ENCODE measurements at regions of chr3 and their contacts with region 1.

Region 1: DNA sequence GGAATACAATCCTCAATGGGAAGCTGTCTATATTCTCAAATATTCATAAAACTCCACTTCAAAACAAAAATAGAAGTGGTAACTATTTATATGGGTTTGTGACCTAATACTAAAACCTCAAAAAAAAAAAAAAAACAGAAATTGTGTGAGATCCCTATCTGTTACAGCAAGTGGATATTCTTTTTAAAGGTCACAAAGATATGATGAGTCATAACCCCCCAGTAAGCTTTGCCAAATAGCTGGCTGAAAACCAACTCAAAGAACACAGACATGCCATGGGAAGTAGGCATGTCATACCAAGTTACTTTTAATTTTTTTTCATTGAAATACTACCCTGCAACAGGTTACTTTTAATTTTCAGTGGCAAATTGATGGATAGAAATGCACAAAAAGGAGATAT is 62.5 kb downstream of the CBLB start:
- DNase-seq: no peak
- ATAC-seq: no peak
- H3K4me3 ChIP-seq: no peak overlapping the region
- H3K27ac ChIP-seq: no peak overlapping the region
- H3K4me1 ChIP-seq: no peaks in the 10 kb centered on the region
- H3K27me3 ChIP-seq: no peaks in the 10 kb centered on the region
- CTCF ChIP-seq: no peak

Region 2: DNA sequence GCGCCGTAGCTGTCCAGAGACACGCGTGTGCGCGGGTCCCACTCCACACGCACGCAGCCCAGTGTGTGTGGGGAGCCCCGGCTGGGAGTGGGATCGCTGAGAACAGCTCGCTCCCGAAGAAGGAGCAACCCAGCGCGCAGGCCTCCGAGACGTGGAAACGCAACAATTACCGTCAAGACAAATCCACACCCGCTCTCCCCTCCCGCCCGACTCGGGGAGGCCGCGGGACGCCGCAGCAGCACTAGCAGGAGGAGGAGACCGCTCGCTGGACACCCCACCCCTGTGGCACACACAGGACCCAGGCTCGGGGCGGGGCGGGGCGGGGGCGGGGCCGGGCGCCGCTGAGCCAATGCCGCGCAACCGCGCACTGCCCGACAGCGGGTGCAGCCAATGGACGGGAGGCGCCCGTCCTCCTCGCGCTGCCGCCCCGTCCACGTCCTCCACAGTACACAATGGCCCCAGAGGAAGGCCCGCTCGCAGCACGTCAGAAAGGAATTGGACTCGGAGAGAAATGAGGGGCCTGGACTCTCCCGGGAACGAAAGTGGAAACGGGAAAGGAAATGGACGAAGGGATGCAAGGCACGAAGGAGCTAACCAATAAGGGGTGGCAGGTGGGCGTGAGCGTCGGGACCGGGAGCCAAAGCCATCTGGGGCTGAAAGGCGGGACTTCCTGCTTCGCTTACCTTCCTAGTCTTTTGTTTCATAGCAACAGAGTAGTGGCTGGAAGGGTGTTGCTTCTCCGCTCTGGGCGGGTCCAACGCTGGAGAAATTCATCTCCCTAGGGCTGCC is 62.6 kb after region 1 on chr3 and contains the start of gene CBLB:
- CTCF ChIA-PET with region 1: no interaction called
- POLR2A ChIA-PET with region 1: no interaction called
- in situ Hi-C with region 1: no loop called
- intact Hi-C with region 1: loop called (anchors 10 kb)
- DNase-seq: peak; percentile 76
- ATAC-seq: peak; percentile 98
- H3K4me3 ChIP-seq: peak within 1 kb of the TSS; percentile 91 to 99
- H3K27ac ChIP-seq: peak within 1 kb of the TSS; percentile 88
- H3K4me1 ChIP-seq: peaks cover 16% of the 10 kb centered on the region
- H3K27me3 ChIP-seq: no peaks in the 10 kb centered on the region
- CTCF ChIP-seq: no peak
- total RNA-seq, gene CBLB: 8.6 TPM

Measured in Panc1 (cell line).